ENCODE measurements at regions of chr18 and their contacts with region 1.

Region 1: GRCh38 chr18:9971313-9971920 is 57.6 kb downstream of the VAPA start:
- DNase-seq: peak; percentile 84
- H3K4me3 Mint-ChIP-seq: no peak overlapping the region
- H3K27ac Mint-ChIP-seq: no peak overlapping the region
- H3K4me1 Mint-ChIP-seq: peaks cover 7% of the 10 kb centered on the region
- H3K27me3 Mint-ChIP-seq: peaks cover 35% of the 10 kb centered on the region

Region 2: DNA sequence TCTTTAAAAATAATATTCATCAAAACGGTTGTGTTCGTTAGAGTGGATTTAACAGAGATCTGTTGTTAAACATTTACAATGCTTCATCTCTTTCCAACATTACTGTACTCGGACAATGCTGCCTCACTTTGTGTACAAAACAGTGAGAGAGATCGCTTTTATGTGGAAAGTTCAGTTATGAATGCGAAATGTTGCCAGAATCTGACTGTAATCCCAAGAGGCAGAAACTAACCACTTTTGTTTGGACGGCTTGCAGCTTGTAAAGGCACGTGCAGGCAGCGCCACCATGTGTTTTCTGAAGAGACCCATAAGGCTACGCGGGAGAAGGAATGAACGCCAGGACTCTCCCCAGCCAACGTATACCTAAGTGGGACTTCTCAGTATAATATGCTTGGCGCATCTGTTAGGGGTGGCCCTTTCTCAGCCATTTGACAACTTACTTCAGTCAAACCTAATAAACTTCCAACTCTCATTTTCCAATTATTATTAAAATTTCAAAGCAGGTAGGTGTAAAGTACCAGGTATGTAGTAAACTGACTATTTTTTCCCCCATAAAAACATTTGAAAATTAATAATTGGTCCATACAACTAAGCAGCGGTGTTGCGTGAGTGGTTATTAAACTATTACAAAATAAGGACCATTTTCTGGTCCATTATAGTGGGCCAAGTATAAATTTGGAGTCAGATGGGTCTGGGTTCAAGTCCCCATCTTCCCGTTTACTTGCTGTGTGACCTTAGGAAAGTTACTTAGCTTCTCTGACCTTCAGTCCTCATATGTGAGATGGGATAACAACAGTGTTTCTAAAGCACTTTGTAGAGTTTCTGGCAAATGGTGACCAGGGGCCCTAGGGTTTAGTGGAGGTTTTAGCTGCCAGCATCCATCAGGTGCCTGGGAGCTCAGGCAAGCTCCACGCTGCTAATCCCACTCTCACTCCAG is 548.9 kb after region 1 on chr18:
- CTCF ChIA-PET with region 1: interaction called, 32 read pairs
- intact Hi-C with region 1: loop called (anchors 1 kb)
- DNase-seq: peak; percentile 84
- H3K4me3 Mint-ChIP-seq: no peak overlapping the region
- H3K27ac Mint-ChIP-seq: no peak overlapping the region
- H3K4me1 Mint-ChIP-seq: peaks cover 14% of the 10 kb centered on the region
- H3K27me3 Mint-ChIP-seq: peaks cover 17% of the 10 kb centered on the region

Region 3: DNA sequence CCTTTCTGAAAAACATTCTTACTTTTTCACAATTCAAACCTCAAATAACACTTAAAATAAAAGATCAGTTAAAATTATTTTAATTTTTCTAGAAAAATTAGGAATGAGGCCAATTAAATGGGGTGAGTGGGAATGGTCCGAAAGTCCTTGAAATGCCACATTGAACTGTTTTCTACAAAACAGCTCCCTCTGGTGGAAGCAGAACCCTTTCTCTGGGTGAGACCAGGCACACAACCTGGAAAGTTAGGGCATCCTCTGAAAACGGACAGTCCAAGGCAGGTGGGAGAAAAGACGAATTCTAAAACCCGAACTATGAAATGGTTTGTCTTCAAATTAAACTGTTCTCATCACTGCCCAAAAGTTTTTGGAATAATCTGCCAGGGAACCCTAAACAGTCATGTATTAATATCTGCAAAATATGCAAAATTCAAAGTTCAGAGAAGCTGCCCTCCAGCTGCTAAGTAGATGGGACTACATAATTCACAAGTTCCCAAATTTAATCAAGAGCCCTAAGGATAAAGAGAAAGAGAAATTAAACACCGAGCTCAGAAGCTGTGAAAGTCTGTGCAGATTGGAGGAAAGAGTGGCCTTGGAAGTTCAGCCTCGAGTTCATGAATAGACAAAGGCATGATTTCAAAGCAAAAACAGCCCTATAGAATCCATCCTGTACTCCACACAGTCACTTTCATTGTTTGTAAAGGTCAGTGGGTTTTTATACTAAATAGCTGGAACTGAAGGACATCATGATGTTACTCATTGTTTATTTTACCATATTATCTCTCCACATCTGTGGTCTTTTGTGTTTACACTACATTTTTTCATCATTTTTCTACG is 1069.6 kb after region 1 on chr18:
- CTCF ChIA-PET with region 1: no interaction called
- intact Hi-C with region 1: loop called (anchors 2 kb)
- DNase-seq: peak; percentile 30
- H3K4me3 Mint-ChIP-seq: no peak overlapping the region
- H3K27ac Mint-ChIP-seq: no peak overlapping the region
- H3K4me1 Mint-ChIP-seq: no peaks in the 10 kb centered on the region
- H3K27me3 Mint-ChIP-seq: peaks cover 16% of the 10 kb centered on the region

Region 4: GRCh38 chr18:11553098-11553940 is 1581.9 kb after region 1 on chr18:
- CTCF ChIA-PET with region 1: no interaction called
- intact Hi-C with region 1: loop called (anchors 2 kb)
- DNase-seq: peak; percentile 53
- H3K4me3 Mint-ChIP-seq: no peak overlapping the region
- H3K27ac Mint-ChIP-seq: no peak overlapping the region
- H3K4me1 Mint-ChIP-seq: no peaks in the 10 kb centered on the region
- H3K27me3 Mint-ChIP-seq: peaks cover 4% of the 10 kb centered on the region

Measured in activated naive CD4-positive, alpha-beta T cell treated with anti-CD3 and anti-CD28 coated beads for 36 hours (primary cell).